Pancreas (tissue), 10 donors: ENCODE measurements at regions of chr18 and their contacts with region 1.

Region 1: GRCh38 chr18:74551936-74552555 is 17.7 kb downstream of the CNDP1 start:
- DNase-seq: peak; percentile 75 to 89 (median 82)
- ATAC-seq: peak; percentile 99 to 100 (median 99)
- H3K4me3 ChIP-seq: no peak overlapping the region
- H3K27ac ChIP-seq: no peak overlapping the region
- H3K4me1 ChIP-seq: peaks cover 0 to 4% (median 0%) of the 10 kb centered on the region in 3 donors
- H3K27me3 ChIP-seq: no peaks in the 10 kb centered on the region
- CTCF ChIP-seq: peak; percentile 56 to 86 (median 70)

Region 2: DNA sequence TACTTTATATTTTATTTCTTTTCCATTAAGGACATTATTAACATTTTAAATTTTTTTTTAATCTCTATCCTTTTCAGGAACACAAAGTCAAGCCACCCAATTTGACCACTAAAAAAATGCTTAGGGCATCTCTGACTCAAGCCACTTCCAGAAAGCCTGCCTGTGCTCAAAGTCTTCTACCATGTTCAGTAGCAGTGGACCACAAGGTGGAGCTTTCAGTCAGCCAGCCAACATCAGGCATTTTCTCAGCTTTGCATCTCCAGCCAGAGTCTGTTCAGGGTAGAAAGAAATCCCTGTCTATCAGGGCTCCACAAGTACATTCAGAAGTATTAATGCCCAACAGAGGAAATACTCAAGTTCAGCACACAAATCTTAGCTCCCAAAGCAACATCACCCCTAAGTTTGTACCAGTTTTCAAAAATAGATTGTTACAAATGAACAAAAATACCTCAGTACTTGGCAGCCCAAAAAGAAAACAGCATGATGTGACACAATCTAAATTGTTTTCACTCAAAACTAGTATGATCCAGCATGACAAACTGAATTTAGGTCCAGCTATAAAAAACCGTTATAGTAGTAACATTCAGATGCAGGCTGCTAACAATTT is 198.8 kb before region 1 on chr18:
- intact Hi-C with region 1: loop called (anchors 5 to 10 kb)
- DNase-seq: peak in 4 of 6 donors; percentile 30 to 71 (median 56)
- ATAC-seq: peak; percentile 75 to 98 (median 97)
- H3K4me3 ChIP-seq: no peak overlapping the region
- H3K27ac ChIP-seq: no peak overlapping the region
- H3K4me1 ChIP-seq: no peaks in the 10 kb centered on the region
- H3K27me3 ChIP-seq: no peaks in the 10 kb centered on the region
- CTCF ChIP-seq: peak; percentile 19 to 65 (median 52)

Region 3: GRCh38 chr18:74360852-74361655 is 191.0 kb before region 1 on chr18:
- intact Hi-C with region 1: loop called (anchors 5 to 10 kb)
- DNase-seq: no peak
- ATAC-seq: no peak
- H3K4me3 ChIP-seq: no peak overlapping the region
- H3K27ac ChIP-seq: no peak overlapping the region
- H3K4me1 ChIP-seq: no peaks in the 10 kb centered on the region
- H3K27me3 ChIP-seq: no peaks in the 10 kb centered on the region
- CTCF ChIP-seq: no peak

Region 4: DNA sequence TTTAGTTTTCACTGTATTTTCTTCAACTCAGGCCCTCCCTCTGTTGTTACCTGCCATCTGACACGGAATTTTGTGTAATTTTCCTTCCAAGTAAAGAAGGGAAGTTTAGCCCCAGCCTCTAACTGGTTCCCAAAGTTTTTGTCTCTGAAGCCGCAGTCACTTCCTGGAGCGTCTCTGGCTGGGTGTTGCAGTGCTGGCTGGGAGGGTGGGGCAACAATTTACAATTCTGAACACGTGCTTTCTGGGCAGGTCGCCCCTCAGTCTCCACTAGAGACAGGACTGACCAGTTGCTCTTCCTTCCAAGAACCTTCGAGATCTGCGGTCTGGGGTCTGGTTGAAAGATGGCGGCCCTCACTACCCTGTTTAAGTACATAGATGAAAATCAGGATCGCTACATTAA is 52.4 kb before region 1 on chr18:
- intact Hi-C with region 1: loop called in 1 of 3 experiments (anchors 10 kb)
- DNase-seq: peak in 4 of 6 donors; percentile 62 to 81 (median 74)
- ATAC-seq: peak; percentile 19 to 68 (median 22)
- H3K4me3 ChIP-seq: peak overlapping the region in 2 of 4 donors; percentile 18 to 31
- H3K27ac ChIP-seq: peak overlapping the region; percentile 12 to 90 (median 59)
- H3K4me1 ChIP-seq: peaks cover 30 to 40% (median 32%) of the 10 kb centered on the region in 3 donors
- H3K27me3 ChIP-seq: no peaks in the 10 kb centered on the region
- CTCF ChIP-seq: no peak

Region 5: DNA sequence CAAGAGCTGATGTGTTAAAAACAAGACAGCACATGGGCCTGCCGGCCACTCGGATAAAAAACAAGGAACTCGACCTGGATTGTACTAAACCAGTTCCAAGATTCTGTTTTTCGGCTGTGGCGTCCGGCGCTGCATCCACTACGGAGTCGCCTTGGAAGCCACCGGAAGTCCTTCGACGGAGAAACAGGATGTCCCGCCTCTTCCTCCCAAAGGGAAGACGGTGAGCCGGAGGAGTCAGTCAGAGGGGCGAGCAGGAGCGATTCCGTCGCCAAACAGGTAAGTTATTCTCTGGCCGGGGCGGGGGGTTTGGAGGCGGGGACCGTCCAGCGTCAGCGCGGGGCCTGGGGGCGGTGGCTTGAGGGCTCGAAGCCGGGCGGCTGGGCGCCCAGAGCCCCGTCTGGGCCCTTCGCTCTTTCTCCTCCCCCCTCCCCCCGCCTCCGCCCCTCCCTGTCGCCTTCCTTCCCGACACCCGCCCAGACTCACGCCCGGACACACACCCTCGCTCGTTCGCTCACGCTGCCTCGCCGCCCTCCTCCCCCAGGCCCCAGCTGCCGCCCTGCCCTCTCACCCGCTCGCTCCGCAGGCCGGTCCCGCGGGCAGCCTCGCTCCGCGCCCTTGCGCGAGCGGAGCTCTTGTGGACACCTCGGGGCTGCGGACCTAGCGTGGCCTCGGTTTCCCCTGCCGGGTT is 45.8 kb after region 1 on chr18 and contains the start of gene ZNF407:
- intact Hi-C with region 1: no loop called
- DNase-seq: peak; percentile 80 to 92 (median 88)
- ATAC-seq: peak; percentile 89 to 95 (median 91)
- H3K4me3 ChIP-seq: peak within 1 kb of the TSS; percentile 88 to 100 (median 93)
- H3K27ac ChIP-seq: peak within 1 kb of the TSS; percentile 94 to 98 (median 96)
- H3K4me1 ChIP-seq: peaks cover 9 to 16% (median 14%) of the 10 kb centered on the region in 3 donors
- H3K27me3 ChIP-seq: no peaks in the 10 kb centered on the region
- CTCF ChIP-seq: no peak
- total RNA-seq, gene ZNF407: 4.5 to 10.0 (median 5.5) TPM